Activated T-helper 1 cell treated with anti-CD3 and anti-CD28 coated beads, Interleukin-12 subunit alpha, Interleukin-12 subunit beta, Interleukin-2, Interleukin-4 antibody, amounts not matched to agents 30 ng/mL and 10 ng/mL and 1 ng/mL, durations not matched to agents 14 hours and 24 hours and 36 hours (primary cell): ENCODE measurements at regions of chr5 and their contacts with region 1.

Region 1: DNA sequence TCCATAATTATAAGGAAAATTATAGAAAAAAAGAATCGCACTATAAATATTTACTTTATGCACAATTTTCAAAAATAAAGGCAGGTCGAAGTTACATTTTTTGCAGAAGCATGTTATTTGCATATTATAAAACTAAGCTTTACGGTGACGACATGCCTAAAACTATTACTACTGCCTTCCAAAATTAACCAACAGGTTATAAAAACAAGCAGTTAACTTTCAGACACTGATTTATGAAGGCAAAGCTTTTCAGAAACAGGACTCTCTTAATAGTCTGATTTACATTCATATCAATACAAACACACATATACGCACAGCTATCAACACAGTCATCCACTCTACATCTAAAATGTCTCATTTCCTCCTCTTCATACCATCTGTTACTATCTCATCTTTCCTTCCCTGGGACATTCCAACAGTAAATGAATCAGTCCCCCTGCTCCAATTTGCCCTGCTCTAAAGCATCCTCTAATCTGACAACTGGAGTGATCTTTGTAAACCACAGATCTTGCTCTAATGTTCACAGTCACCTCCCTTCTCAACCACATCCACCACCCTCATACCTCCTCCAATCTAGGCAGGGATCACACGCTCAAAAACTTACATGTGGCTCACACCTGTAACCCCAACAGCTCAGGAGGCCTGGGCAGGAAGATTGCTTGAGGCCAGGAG is 21.6 kb downstream of the FBXW11 start:
- DNase-seq: peak; percentile 49
- H3K4me3 Mint-ChIP-seq: no peak overlapping the region
- H3K27ac Mint-ChIP-seq: peak overlapping the region; percentile 16
- H3K4me1 Mint-ChIP-seq: peaks cover 42% of the 10 kb centered on the region
- H3K27me3 Mint-ChIP-seq: no peaks in the 10 kb centered on the region

Region 2: GRCh38 chr5:171953860-171954701 is 30.8 kb before region 1 on chr5:
- intact Hi-C with region 1: loop called (anchors 5 kb)
- DNase-seq: no peak
- H3K4me3 Mint-ChIP-seq: no peak overlapping the region
- H3K27ac Mint-ChIP-seq: no peak overlapping the region
- H3K4me1 Mint-ChIP-seq: peaks cover 37% of the 10 kb centered on the region
- H3K27me3 Mint-ChIP-seq: no peaks in the 10 kb centered on the region

Region 3: DNA sequence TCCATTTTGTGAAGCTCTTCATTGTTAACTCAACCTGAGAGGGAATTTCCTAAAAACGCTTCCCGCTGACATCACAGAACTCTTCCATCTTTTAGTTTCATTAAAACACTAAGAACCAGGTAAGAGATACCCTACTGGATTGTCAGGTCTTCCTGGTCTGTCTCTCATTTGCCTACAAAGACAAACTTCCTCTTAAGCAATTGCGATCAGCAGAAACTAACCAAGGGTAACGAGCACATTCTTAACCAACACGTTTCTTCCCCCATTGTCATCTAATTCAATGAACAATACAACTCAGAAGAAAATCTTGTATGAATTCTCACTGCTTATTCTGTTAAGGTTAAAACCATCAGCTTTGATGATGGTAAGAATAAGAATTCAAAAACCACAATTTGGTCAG is 15.0 kb after region 1 on chr5:
- intact Hi-C with region 1: loop called (anchors 1 kb)
- DNase-seq: no peak
- H3K4me3 Mint-ChIP-seq: no peak overlapping the region
- H3K27ac Mint-ChIP-seq: no peak overlapping the region
- H3K4me1 Mint-ChIP-seq: peaks cover 69% of the 10 kb centered on the region
- H3K27me3 Mint-ChIP-seq: no peaks in the 10 kb centered on the region